Right ventricle myocardium inferior (tissue), 1 donor: ENCODE measurements at regions of chr5 and their contacts with region 1.

Region 1: DNA sequence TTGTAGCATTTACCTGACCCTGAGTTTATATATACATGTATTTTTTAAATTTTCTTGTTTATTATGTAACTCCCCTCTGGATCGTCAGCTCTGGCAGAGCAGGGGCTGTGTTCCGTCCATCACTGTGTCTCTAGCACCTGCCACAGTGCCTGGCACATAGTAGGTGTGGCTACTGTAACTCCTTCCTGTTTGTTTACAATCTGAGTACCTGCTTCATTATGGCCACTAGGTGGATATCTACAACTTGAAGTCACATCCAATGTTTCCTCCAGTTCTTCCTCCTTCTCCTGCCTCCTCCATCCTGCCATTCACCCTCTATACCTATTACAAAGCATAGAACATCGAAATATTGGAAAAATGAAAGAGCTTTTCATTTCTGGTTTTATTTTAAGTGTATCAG is 14.2 kb upstream of the PPP1R2B start:
- DNase-seq: no peak
- ATAC-seq: no peak

Region 2: DNA sequence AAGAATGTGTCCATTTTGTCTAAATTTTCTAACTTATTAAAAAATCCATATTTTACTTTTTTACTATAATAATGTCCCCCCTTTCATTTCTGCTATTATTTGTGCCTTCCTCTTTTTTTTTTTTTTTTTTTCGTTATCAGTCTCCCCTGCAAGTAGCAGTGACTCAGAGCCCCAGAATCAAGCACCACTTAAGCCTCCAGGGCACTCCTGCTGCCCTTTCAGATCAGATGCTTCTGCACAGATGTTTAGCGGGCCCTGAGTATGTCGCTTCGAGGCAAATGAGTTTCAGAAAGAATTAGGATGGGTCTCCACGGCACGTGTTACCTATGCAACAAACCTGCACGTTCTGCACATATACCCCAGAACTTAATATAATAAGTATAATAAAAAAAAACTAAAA is 295.0 kb after region 1 on chr5:
- intact Hi-C with region 1: loop called (anchors 5 kb)
- DNase-seq: no peak
- ATAC-seq: peak; percentile 42